HAP-1 (cell line): ENCODE measurements at regions of chr7 and their contacts with region 1.

Region 1: DNA sequence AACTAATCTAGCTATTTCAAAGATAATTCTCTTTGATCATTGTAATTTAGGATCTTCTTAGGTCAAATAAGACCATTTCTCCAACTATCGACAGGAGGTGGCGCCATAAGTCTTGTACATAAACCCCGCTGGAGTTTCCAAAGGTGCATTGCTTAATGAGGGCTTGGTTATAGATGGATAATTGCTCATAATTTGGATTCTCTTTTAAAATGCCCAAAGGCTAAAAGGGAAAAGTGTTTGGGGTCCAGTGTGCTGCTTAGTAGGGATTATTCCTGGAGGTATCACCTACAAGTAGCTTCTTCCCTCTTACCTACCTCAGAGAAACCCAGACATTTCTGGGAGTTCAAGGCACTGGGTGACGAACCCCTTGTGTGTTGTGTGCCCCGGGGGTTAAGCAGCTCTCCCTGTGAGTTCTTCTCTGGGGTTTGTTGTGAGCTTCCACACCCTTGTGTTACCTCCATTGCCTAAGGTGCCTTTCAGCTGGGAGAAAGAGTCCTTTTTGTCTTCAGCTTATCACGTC is 75.2 kb downstream of the PAXIP1 start:
- DNase-seq: peak; percentile 79 to 87
- H3K4me3 ChIP-seq: peak overlapping the region; percentile 27
- H3K4me1 ChIP-seq: peaks cover 5% of the 10 kb centered on the region; the same call in 1 of the 2 replicates
- H3K27me3 ChIP-seq: peaks cover 20% of the 10 kb centered on the region

Region 2: GRCh38 chr7:155344600-155345433 is 417.1 kb after region 1 on chr7:
- in situ Hi-C with region 1: loop called (anchors 10 kb)
- DNase-seq: peak; percentile 59 to 84
- H3K4me3 ChIP-seq: peak overlapping the region; percentile 28
- H3K4me1 ChIP-seq: peaks cover 3% of the 10 kb centered on the region; the same call in 1 of the 2 replicates
- H3K27me3 ChIP-seq: peaks cover 8% of the 10 kb centered on the region; the same call in 1 of the 2 replicates

Region 3: GRCh38 chr7:155763691-155764437 is 836.2 kb after region 1 on chr7:
- in situ Hi-C with region 1: loop called (anchors 25 kb)
- DNase-seq: no peak
- H3K4me3 ChIP-seq: no peak overlapping the region
- H3K4me1 ChIP-seq: no peaks in the 10 kb centered on the region
- H3K27me3 ChIP-seq: no peaks in the 10 kb centered on the region